OCI-LY7 (cell line): ENCODE measurements at regions of chr1 and their contacts with region 1.

Region 1: DNA sequence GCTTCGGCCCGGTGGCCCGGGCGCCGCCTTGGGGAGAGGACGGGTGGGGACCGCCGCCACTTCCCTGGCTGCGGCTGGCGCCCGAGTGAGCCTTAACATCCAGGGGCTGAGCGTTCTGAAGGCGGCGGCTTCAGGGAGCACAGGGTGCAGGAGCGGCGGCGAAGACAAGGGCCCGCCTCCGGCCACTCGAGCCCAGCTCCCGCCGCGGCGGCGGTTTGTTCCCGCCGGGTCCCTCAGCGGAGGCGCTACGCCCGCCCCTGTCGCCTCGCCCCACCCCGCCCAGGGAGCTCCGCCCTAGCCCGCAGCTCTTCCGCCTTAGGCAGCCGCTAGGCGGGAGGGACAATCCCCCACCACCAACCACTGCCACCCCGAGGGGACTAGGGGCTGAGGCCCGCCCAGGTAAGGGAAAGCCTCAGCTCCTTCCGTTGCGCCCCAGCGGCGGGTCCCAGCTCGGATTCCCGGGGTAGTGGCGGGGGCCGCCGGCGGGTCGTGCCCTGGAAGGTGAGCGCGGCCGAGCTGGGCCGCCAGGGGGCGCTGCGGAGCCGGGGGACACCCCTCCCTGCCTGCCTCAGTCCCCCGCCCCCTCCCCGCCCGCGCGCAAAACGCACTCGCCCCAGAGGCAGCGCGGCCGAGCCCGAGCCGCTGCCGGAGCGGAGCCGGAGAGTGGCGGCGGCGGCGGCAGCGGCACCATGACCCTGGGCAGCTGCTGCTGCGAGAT is at the start of gene FOXD2:
- DNase-seq: peak; percentile 97
- H3K4me3 ChIP-seq: peak within 1 kb of the TSS; percentile 92
- H3K27ac ChIP-seq: peak within 1 kb of the TSS; percentile 78
- H3K4me1 ChIP-seq: peaks cover 11% of the 10 kb centered on the region
- CTCF ChIP-seq: peak; percentile 80
- total RNA-seq, gene FOXD2: 0.44 and 0.76 TPM in 2 replicates

Region 2: GRCh38 chr1:47179017-47179987 is 258.3 kb before region 1 on chr1:
- CTCF ChIA-PET with region 1: no interaction called
- POLR2A ChIA-PET with region 1: no interaction called
- intact Hi-C with region 1: loop called (anchors 5 kb)
- DNase-seq: peak; percentile 75
- H3K4me3 ChIP-seq: peak overlapping the region; percentile 23
- H3K27ac ChIP-seq: no peak overlapping the region
- H3K4me1 ChIP-seq: no peaks in the 10 kb centered on the region
- CTCF ChIP-seq: peak; percentile 83

Region 3: DNA sequence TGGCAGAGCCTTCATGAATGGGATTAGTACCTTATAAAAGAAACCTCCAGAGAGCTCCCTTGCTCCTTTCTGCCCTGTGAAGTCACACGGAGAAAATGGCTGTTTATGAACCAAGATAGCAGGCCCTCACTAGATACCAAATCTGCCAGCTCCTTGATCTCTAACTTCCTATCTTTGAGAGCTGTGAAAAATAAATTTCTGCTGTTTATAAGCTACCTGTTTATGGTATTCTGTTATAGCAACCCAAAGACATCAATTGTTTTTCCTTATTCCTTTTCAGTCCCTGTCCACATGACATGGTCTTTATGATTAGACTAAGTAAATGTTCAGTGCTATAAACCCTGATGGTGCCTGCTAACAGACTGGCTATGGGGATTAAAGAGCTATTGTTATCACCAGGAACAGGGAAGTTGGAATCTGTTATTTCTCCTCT is 114.0 kb before region 1 on chr1:
- CTCF ChIA-PET with region 1: no interaction called
- POLR2A ChIA-PET with region 1: no interaction called
- intact Hi-C with region 1: no loop called
- DNase-seq: no peak
- H3K4me3 ChIP-seq: no peak overlapping the region
- H3K27ac ChIP-seq: no peak overlapping the region
- H3K4me1 ChIP-seq: no peaks in the 10 kb centered on the region
- CTCF ChIP-seq: no peak

Region 4: GRCh38 chr1:47333922-47334764 is 103.5 kb before region 1 on chr1:
- CTCF ChIA-PET with region 1: no interaction called
- POLR2A ChIA-PET with region 1: interaction called, 4 read pairs
- intact Hi-C with region 1: loop called (anchors 2 kb)
- DNase-seq: peak; percentile 90
- H3K4me3 ChIP-seq: peak overlapping the region; percentile 86
- H3K27ac ChIP-seq: peak overlapping the region; percentile 85
- H3K4me1 ChIP-seq: peaks cover 26% of the 10 kb centered on the region
- CTCF ChIP-seq: peak; percentile 68

Region 5: DNA sequence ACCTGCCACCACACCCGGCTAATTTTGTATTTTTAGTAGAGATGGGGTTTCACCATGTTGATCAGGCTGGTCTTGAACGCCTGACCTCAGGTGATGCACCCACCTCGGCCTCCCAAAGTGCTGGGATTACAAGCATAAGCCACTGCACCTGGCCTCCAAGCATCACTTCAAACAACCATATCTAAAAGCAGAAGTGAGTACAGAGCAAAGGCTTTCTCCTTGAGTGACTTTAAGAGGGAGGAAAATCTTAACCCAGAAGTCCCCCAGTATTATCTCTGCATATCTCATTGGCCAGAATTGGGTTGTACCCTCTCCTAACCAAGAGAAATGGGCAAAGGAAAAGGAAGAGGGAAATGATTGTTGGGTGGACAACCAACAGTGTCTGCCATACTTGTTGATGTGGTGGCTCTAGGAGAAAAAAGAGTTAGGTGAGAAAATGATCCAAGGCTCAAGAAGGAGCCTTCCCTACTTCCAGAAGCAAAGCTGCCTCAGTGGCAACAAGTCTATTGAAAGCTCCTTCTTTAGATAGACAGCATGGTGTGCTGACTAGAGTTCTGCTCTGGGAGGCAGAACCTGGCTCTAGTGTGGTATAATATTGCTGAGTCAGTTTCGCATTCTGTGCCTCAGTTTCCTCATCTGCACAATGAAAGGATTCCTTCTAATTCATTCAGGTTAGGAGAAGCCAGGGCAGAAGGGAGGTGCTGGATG is 38.3 kb before region 1 on chr1:
- CTCF ChIA-PET with region 1: interaction called, 6 read pairs
- POLR2A ChIA-PET with region 1: interaction called, 5 read pairs
- intact Hi-C with region 1: loop called (anchors 1 kb)
- DNase-seq: peak; percentile 91
- H3K4me3 ChIP-seq: peak overlapping the region; percentile 18
- H3K27ac ChIP-seq: peak overlapping the region; percentile 82
- H3K4me1 ChIP-seq: peaks cover 79% of the 10 kb centered on the region
- CTCF ChIP-seq: no peak

Region 6: DNA sequence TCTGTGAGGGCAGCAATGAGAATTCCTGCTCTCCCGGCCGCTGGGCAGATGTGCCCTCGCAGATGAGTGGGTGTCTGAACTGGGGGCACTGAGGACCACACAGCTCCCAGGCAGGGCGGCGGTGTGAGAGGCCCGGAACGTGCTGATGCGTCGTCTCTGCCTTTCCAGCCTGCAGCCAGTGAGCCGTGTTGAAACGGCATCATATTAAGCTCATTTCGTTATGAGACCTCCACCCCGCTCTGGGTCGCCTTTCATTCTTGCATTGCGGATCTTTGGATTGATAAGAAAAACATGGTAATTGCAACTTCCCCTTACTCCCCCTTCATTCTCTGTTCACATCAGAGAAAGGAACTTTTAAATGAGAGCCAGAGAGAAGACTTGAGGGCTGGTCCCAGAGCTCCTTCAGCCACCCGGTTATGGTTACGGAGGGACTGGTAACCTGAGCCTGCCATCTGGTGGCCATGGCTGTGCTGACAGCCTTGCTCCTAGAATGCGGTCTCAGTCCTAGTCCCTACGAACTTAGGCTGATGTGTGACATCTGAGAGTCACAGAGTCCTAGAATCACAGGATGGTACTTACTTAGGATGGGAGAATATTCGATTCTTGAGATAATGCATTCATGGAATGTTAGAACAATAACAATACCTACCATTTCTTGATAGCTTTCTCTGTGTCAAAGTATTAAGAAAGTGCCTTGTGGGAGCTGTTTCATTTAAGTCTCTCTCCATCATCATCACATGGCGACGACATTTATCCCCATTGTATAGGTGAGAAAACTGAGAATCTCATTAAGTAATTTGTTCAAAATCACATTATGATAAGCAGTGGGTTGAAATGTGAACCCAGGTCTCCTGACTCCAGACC is 288.6 kb after region 1 on chr1:
- CTCF ChIA-PET with region 1: interaction called, 5 read pairs
- POLR2A ChIA-PET with region 1: no interaction called
- intact Hi-C with region 1: loop called (anchors 5 kb)
- DNase-seq: peak; percentile 72
- H3K4me3 ChIP-seq: no peak overlapping the region
- H3K27ac ChIP-seq: no peak overlapping the region
- H3K4me1 ChIP-seq: peaks cover 11% of the 10 kb centered on the region
- CTCF ChIP-seq: peak; percentile 87